IMR-90 (cell line): ENCODE measurements at regions of chr13 and their contacts with region 1.

Region 1: GRCh38 chr13:78658635-78659449 is at the start of gene OBI1:
- DNase-seq: peak; percentile 89
- ATAC-seq: peak; percentile 97
- H3K4me3 ChIP-seq: peak within 1 kb of the TSS; percentile 84
- H3K27ac ChIP-seq: peak within 1 kb of the TSS; percentile 75
- H3K4me1 ChIP-seq: peaks cover 5% of the 10 kb centered on the region
- H3K27me3 ChIP-seq: peaks cover 2% of the 10 kb centered on the region; the same call in 1 of the 2 replicates
- CTCF ChIP-seq: no peak
- POLR2A ChIP-seq: no peak
- RAD21 ChIP-seq: no peak
- total RNA-seq, gene OBI1: 11.8 and 19.7 TPM in 2 replicates

Region 2: DNA sequence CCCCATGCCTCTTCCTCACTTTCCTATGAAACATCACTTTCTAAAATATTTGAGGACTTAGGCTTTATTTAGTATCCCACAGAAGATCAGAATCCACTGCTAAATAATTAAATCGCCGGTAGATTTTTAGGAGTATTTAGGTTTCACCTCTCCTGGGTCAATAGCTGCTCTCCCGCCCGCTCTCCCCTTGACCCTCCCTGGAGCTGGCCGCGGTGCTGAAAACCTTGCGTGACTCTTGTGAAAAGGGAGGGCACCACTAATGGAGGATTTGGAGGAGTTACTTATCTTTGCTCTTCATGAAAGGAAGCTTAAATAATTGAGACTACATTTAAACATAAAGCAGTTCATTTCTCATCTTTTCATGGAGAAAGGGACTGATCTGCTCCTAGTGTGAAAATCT is 69.6 kb before region 1 on chr13:
- CTCF ChIA-PET with region 1: no interaction called
- POLR2A ChIA-PET with region 1: interaction called, 15 read pairs
- dilution Hi-C with region 1: no loop called
- in situ Hi-C with region 1: no loop called
- intact Hi-C with region 1: no loop called
- DNase-seq: peak; percentile 9
- ATAC-seq: 0 out of 2 replicates have a peak, but pooled peaks have one; percentile 54
- H3K4me3 ChIP-seq: no peak overlapping the region
- H3K27ac ChIP-seq: no peak overlapping the region
- H3K4me1 ChIP-seq: no peaks in the 10 kb centered on the region
- H3K27me3 ChIP-seq: peaks cover 46% of the 10 kb centered on the region
- CTCF ChIP-seq: no peak
- POLR2A ChIP-seq: no peak
- RAD21 ChIP-seq: no peak

Region 3: GRCh38 chr13:78638216-78638615 is 20.6 kb before region 1 on chr13:
- CTCF ChIA-PET with region 1: no interaction called
- POLR2A ChIA-PET with region 1: no interaction called
- dilution Hi-C with region 1: no loop called
- in situ Hi-C with region 1: no loop called
- intact Hi-C with region 1: loop called (anchors 2 kb)
- DNase-seq: no peak
- ATAC-seq: no peak
- H3K4me3 ChIP-seq: no peak overlapping the region
- H3K27ac ChIP-seq: no peak overlapping the region
- H3K4me1 ChIP-seq: no peaks in the 10 kb centered on the region
- H3K27me3 ChIP-seq: no peaks in the 10 kb centered on the region
- CTCF ChIP-seq: no peak
- POLR2A ChIP-seq: no peak
- RAD21 ChIP-seq: no peak